ENCODE measurements at regions of chr12 and their contacts with region 1.

Region 1: DNA sequence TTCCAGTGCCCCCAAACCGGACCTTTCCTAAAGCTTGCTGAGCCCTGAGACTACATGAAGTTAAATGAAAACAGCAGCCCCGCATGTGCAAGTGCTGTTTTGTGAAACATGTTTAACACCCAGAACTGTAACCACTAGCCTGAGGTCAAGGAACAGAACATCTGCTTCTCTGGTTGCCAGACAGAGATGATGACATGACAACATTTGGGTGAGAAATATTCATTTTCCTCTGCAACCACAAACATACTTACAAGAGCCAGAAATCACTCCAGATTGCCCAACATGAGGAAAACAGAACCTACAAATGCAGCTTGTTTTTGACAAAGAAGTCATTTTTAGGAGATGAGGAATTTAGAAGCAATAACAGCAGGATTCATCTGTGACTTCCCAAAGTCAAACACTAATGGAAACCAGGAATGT is 110.4 kb downstream of the BCAT1 start:
- DNase-seq: peak; percentile 53
- ATAC-seq: peak; percentile 6
- H3K4me3 Mint-ChIP-seq: peak overlapping the region; percentile 36
- H3K27ac Mint-ChIP-seq: peak overlapping the region; percentile 87
- H3K4me1 Mint-ChIP-seq: peaks cover 51% of the 10 kb centered on the region
- H3K27me3 Mint-ChIP-seq: peaks cover 10% of the 10 kb centered on the region

Region 2: GRCh38 chr12:23204933-23205778 is 1633.4 kb before region 1 on chr12:
- CTCF ChIA-PET with region 1: interaction called, 3 read pairs
- POLR2A ChIA-PET with region 1: no interaction called
- intact Hi-C with region 1: loop called in 1 of 2 experiments (anchors 1 kb)
- DNase-seq: no peak
- ATAC-seq: peak; percentile 51
- H3K4me3 Mint-ChIP-seq: no peak overlapping the region
- H3K27ac Mint-ChIP-seq: no peak overlapping the region
- H3K4me1 Mint-ChIP-seq: no peaks in the 10 kb centered on the region
- H3K27me3 Mint-ChIP-seq: peaks cover 5% of the 10 kb centered on the region

Region 3: GRCh38 chr12:24705741-24706358 is 132.7 kb before region 1 on chr12:
- CTCF ChIA-PET with region 1: interaction called, 3 read pairs
- POLR2A ChIA-PET with region 1: no interaction called
- intact Hi-C with region 1: loop called (anchors 1 kb)
- DNase-seq: peak; percentile 22
- ATAC-seq: peak; percentile 21
- H3K4me3 Mint-ChIP-seq: peak overlapping the region; percentile 42
- H3K27ac Mint-ChIP-seq: peak overlapping the region; percentile 86
- H3K4me1 Mint-ChIP-seq: peaks cover 16% of the 10 kb centered on the region
- H3K27me3 Mint-ChIP-seq: peaks cover 12% of the 10 kb centered on the region

Region 4: GRCh38 chr12:24795699-24796385 is 42.7 kb before region 1 on chr12:
- CTCF ChIA-PET with region 1: interaction called, 3 read pairs
- POLR2A ChIA-PET with region 1: no interaction called
- intact Hi-C with region 1: loop called (anchors 2 kb)
- DNase-seq: peak; percentile 28
- ATAC-seq: peak; percentile 83
- H3K4me3 Mint-ChIP-seq: peak overlapping the region; percentile 64
- H3K27ac Mint-ChIP-seq: peak overlapping the region; percentile 70
- H3K4me1 Mint-ChIP-seq: peaks cover 31% of the 10 kb centered on the region
- H3K27me3 Mint-ChIP-seq: no peaks in the 10 kb centered on the region

Region 5: GRCh38 chr12:24922090-24922489 is 83.5 kb after region 1 on chr12:
- CTCF ChIA-PET with region 1: interaction called, 5 read pairs
- POLR2A ChIA-PET with region 1: interaction called, 7 read pairs
- intact Hi-C with region 1: loop called (anchors 1 kb)
- DNase-seq: no peak
- ATAC-seq: peak; percentile 23
- H3K4me3 Mint-ChIP-seq: no peak overlapping the region
- H3K27ac Mint-ChIP-seq: peak overlapping the region; percentile 71
- H3K4me1 Mint-ChIP-seq: peaks cover 41% of the 10 kb centered on the region
- H3K27me3 Mint-ChIP-seq: peaks cover 6% of the 10 kb centered on the region

Region 6: DNA sequence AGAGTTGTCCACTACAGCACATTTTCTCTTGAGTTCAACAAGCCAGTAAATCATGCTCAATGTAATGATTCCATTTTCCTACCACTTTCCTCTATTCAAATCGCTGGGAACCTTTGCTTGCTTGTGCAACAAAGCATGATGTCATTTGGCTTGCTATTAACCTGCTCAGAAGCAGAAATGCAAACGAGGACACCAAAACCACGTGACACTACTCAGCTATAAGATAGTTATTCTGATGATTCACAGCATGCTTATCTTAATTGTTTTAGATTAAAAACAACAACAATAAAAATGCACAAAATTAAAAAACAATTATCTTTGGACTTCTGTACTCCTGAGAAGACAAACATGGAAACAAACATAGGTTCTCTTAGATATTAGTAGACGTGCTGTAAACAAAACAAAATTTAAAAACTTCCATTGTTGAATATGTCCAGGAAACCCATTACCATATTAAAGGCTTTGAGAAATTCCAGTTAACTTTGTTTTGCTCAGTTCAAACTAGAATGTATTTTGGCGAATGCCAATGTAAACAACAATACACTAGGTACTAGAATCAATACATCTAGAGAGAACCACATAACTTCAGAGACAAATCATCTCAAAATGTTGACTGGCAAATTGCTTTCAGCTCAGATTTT is 489.7 kb after region 1 on chr12:
- CTCF ChIA-PET with region 1: no interaction called
- POLR2A ChIA-PET with region 1: no interaction called
- intact Hi-C with region 1: loop called in 1 of 2 experiments (anchors 2 kb)
- DNase-seq: no peak
- ATAC-seq: no peak
- H3K4me3 Mint-ChIP-seq: no peak overlapping the region
- H3K27ac Mint-ChIP-seq: no peak overlapping the region
- H3K4me1 Mint-ChIP-seq: peaks cover 23% of the 10 kb centered on the region
- H3K27me3 Mint-ChIP-seq: no peaks in the 10 kb centered on the region